HepG2 (cell line): ENCODE measurements at regions of chr11 and their contacts with region 1.

Region 1: GRCh38 chr11:118659314-118659952 is 20.0 kb downstream of the TREH start:
- DNase-seq: peak; percentile 82
- ATAC-seq: peak; percentile 90
- H3K4me3 ChIP-seq: peak overlapping the region in 2 of 3 experiments; percentile 25 to 53; a peak in 2 of 6 replicates
- H3K27ac ChIP-seq: no peak overlapping the region
- H3K4me1 ChIP-seq: peaks cover 35% of the 10 kb centered on the region
- H3K27me3 ChIP-seq: no peaks in the 10 kb centered on the region
- CTCF ChIP-seq: peak; percentile 99
- EP300 ChIP-seq: 0 out of 4 replicates have a peak, but pooled peaks of 1 of the 2 experiments have one; percentile 8
- POLR2A ChIP-seq: no peak
- RAD21 ChIP-seq: peak; percentile 97

Region 2: DNA sequence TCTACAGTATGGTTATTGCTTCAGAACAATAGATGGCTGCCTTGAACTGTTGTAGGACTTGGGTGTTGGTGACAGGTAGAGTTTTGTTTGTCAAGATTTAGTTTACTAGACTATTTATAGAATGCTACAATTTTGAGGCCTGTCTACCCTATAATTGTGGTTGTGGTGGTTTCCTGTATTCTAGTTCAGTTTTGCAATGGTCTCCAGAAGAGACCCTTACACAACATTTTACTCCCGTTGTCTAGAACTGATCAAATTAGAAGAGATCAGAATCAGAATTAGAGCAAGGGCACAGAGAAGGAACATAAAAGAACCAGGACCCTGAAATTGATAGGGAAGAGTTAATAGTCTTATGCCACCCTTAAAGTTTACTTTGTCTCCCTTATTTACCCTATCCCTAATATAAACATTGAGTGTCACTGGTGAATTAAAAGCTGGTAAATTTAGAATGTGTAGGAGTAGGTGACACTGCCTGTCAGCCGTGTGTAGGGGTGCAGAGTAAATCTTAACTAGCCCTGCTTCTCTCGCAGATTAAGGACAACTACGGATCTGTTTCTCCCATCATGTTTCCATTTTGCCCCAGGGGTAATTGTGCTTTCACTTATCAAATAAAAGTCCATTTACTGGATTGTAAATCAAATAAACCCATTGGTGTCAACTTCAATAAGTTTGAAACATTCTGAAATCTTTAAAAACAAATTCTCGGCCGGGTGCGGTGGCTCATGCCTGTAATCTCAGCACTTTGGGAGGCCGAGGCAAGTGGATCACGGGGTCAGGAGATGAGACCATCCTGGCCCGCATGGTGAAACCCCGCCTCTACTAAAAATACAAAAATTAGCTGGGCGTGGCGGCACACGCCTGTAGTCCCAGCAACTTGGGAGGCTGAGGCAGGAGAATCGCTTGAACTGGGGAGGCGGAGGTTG is 62.9 kb before region 1 on chr11:
- CTCF ChIA-PET with region 1: interaction called, 23 read pairs
- POLR2A ChIA-PET with region 1: no interaction called
- in situ Hi-C with region 1: no loop called
- intact Hi-C with region 1: no loop called
- DNase-seq: no peak
- ATAC-seq: no peak
- H3K4me3 ChIP-seq: no peak overlapping the region
- H3K27ac ChIP-seq: no peak overlapping the region
- H3K4me1 ChIP-seq: no peaks in the 10 kb centered on the region
- H3K27me3 ChIP-seq: no peaks in the 10 kb centered on the region
- CTCF ChIP-seq: no peak
- EP300 ChIP-seq: no peak
- POLR2A ChIP-seq: no peak
- RAD21 ChIP-seq: no peak

Region 3: GRCh38 chr11:118607401-118608359 is 51.8 kb before region 1 on chr11 and contains the start of gene PHLDB1:
- CTCF ChIA-PET with region 1: interaction called, 16 read pairs
- POLR2A ChIA-PET with region 1: no interaction called
- in situ Hi-C with region 1: no loop called
- intact Hi-C with region 1: loop called (anchors 2 kb)
- DNase-seq: peak; percentile 45
- ATAC-seq: peak; percentile 68
- H3K4me3 ChIP-seq: peak within 1 kb of the TSS; percentile 65 to 84 (median 81)
- H3K27ac ChIP-seq: no peak within 1 kb of the TSS
- H3K4me1 ChIP-seq: peaks cover 39% of the 10 kb centered on the region
- H3K27me3 ChIP-seq: peaks cover 0 to 6% of the 10 kb centered on the region in 2 experiments; a peak in 1 of 5 replicates
- CTCF ChIP-seq: peak; percentile 72
- EP300 ChIP-seq: no peak
- POLR2A ChIP-seq: no peak
- RAD21 ChIP-seq: no peak
- total RNA-seq, gene PHLDB1: 9.9 and 13.8 TPM in 2 replicates

Region 4: GRCh38 chr11:118672846-118673245 is 13.4 kb after region 1 on chr11:
- CTCF ChIA-PET with region 1: interaction called, 7 read pairs
- POLR2A ChIA-PET with region 1: interaction called, 15 read pairs
- in situ Hi-C with region 1: no loop called
- intact Hi-C with region 1: loop called (anchors 1 kb)
- DNase-seq: no peak
- ATAC-seq: peak; percentile 63
- H3K4me3 ChIP-seq: peak overlapping the region in 1 of 3 experiments; percentile 1; a peak in 1 of 6 replicates
- H3K27ac ChIP-seq: peak overlapping the region; percentile 76
- H3K4me1 ChIP-seq: peaks cover 44% of the 10 kb centered on the region
- H3K27me3 ChIP-seq: no peaks in the 10 kb centered on the region
- CTCF ChIP-seq: peak; percentile 42
- EP300 ChIP-seq: no peak
- POLR2A ChIP-seq: no peak
- RAD21 ChIP-seq: no peak

Region 5: DNA sequence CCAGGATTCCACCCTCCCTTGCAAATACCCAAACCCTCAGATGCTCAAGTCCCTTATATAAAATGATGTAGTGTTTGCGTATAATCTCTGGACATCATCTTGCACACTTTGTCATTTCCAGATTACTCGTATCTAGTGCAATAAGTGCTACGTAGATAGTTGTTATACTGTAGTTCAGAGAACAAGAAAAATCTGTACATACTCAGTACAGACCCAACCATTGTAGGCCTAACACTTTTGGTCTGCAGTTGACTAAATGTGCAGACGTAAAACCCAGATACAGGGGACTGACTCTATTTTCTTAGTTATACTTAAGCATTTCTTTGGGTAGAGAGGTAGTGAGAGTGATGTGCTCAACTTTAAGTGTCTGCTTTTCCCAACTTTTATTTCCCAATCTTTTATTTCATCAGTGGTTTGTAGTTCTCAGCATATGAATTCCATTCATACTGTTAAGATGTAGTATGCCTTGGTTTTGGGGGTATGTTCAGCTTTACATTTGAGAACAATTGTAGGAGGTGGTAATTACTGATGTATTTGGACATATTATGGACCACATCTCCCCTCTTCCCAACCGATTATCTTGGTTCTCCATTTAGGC is 87.7 kb after region 1 on chr11:
- CTCF ChIA-PET with region 1: no interaction called
- POLR2A ChIA-PET with region 1: no interaction called
- in situ Hi-C with region 1: no loop called
- intact Hi-C with region 1: no loop called
- DNase-seq: no peak
- ATAC-seq: no peak
- H3K4me3 ChIP-seq: no peak overlapping the region
- H3K27ac ChIP-seq: no peak overlapping the region
- H3K4me1 ChIP-seq: peaks cover 30% of the 10 kb centered on the region
- H3K27me3 ChIP-seq: no peaks in the 10 kb centered on the region; a peak in 1 of 5 replicates
- CTCF ChIP-seq: no peak
- EP300 ChIP-seq: no peak
- POLR2A ChIP-seq: no peak
- RAD21 ChIP-seq: no peak